CD4-positive, alpha-beta memory T cell (primary cell): ENCODE measurements at regions of chr1 and their contacts with region 1.

Region 1: GRCh38 chr1:222455188-222455879 is 92.6 kb downstream of the HHIPL2 start:
- DNase-seq: peak; percentile 76 to 81 (median 80)
- H3K4me3 ChIP-seq: no peak overlapping the region
- H3K4me3 Mint-ChIP-seq: peak overlapping the region in 7 of 8 donors; percentile 5 to 69 (median 46)
- H3K27ac ChIP-seq: no peak overlapping the region
- H3K27ac Mint-ChIP-seq: peak overlapping the region in 5 of 7 donors; percentile 2 to 87 (median 24)
- H3K4me1 ChIP-seq: peaks cover 7% of the 10 kb centered on the region
- H3K4me1 Mint-ChIP-seq: peaks cover 7 to 21% (median 18%) of the 10 kb centered on the region in 4 donors
- H3K27me3 ChIP-seq: no peaks in the 10 kb centered on the region
- H3K27me3 Mint-ChIP-seq: peaks cover 0 to 1% of the 10 kb centered on the region in 2 donors

Region 2: GRCh38 chr1:221891708-221892107 is 563.6 kb before region 1 on chr1:
- CTCF ChIA-PET with region 1: no interaction called
- POLR2A ChIA-PET with region 1: no interaction called
- intact Hi-C with region 1: loop called (anchors 2 kb)
- DNase-seq: no peak
- H3K4me3 ChIP-seq: no peak overlapping the region
- H3K4me3 Mint-ChIP-seq: no peak overlapping the region
- H3K27ac ChIP-seq: no peak overlapping the region
- H3K27ac Mint-ChIP-seq: no peak overlapping the region
- H3K4me1 ChIP-seq: no peaks in the 10 kb centered on the region
- H3K4me1 Mint-ChIP-seq: no peaks in the 10 kb centered on the region
- H3K27me3 ChIP-seq: no peaks in the 10 kb centered on the region
- H3K27me3 Mint-ChIP-seq: peaks cover 3 to 5% of the 10 kb centered on the region in 2 donors

Region 3: GRCh38 chr1:222095606-222096475 is 359.5 kb before region 1 on chr1:
- CTCF ChIA-PET with region 1: interaction called, 370 read pairs
- POLR2A ChIA-PET with region 1: interaction called, 6 read pairs
- intact Hi-C with region 1: loop called (anchors 1 kb)
- DNase-seq: peak; percentile 53 to 69 (median 61)
- H3K4me3 ChIP-seq: no peak overlapping the region
- H3K4me3 Mint-ChIP-seq: no peak overlapping the region
- H3K27ac ChIP-seq: no peak overlapping the region
- H3K27ac Mint-ChIP-seq: no peak overlapping the region
- H3K4me1 ChIP-seq: no peaks in the 10 kb centered on the region
- H3K4me1 Mint-ChIP-seq: no peaks in the 10 kb centered on the region
- H3K27me3 ChIP-seq: no peaks in the 10 kb centered on the region
- H3K27me3 Mint-ChIP-seq: no peaks in the 10 kb centered on the region

Region 4: GRCh38 chr1:222266223-222267196 is 188.8 kb before region 1 on chr1:
- CTCF ChIA-PET with region 1: interaction called, 11 read pairs
- POLR2A ChIA-PET with region 1: no interaction called
- intact Hi-C with region 1: no loop called
- DNase-seq: no peak
- H3K4me3 ChIP-seq: no peak overlapping the region
- H3K4me3 Mint-ChIP-seq: no peak overlapping the region
- H3K27ac ChIP-seq: no peak overlapping the region
- H3K27ac Mint-ChIP-seq: peak overlapping the region in 2 of 7 donors; percentile 23 to 29
- H3K4me1 ChIP-seq: no peaks in the 10 kb centered on the region
- H3K4me1 Mint-ChIP-seq: peaks cover 0 to 4% (median 1%) of the 10 kb centered on the region in 4 donors
- H3K27me3 ChIP-seq: no peaks in the 10 kb centered on the region
- H3K27me3 Mint-ChIP-seq: no peaks in the 10 kb centered on the region

Region 5: GRCh38 chr1:222334026-222334680 is 121.2 kb before region 1 on chr1:
- CTCF ChIA-PET with region 1: no interaction called
- POLR2A ChIA-PET with region 1: no interaction called
- intact Hi-C with region 1: no loop called
- DNase-seq: no peak
- H3K4me3 ChIP-seq: no peak overlapping the region
- H3K4me3 Mint-ChIP-seq: no peak overlapping the region
- H3K27ac ChIP-seq: no peak overlapping the region
- H3K27ac Mint-ChIP-seq: no peak overlapping the region
- H3K4me1 ChIP-seq: no peaks in the 10 kb centered on the region
- H3K4me1 Mint-ChIP-seq: peaks cover 0 to 3% (median 0%) of the 10 kb centered on the region in 4 donors
- H3K27me3 ChIP-seq: no peaks in the 10 kb centered on the region
- H3K27me3 Mint-ChIP-seq: peaks cover 0 to 2% of the 10 kb centered on the region in 2 donors

Region 6: DNA sequence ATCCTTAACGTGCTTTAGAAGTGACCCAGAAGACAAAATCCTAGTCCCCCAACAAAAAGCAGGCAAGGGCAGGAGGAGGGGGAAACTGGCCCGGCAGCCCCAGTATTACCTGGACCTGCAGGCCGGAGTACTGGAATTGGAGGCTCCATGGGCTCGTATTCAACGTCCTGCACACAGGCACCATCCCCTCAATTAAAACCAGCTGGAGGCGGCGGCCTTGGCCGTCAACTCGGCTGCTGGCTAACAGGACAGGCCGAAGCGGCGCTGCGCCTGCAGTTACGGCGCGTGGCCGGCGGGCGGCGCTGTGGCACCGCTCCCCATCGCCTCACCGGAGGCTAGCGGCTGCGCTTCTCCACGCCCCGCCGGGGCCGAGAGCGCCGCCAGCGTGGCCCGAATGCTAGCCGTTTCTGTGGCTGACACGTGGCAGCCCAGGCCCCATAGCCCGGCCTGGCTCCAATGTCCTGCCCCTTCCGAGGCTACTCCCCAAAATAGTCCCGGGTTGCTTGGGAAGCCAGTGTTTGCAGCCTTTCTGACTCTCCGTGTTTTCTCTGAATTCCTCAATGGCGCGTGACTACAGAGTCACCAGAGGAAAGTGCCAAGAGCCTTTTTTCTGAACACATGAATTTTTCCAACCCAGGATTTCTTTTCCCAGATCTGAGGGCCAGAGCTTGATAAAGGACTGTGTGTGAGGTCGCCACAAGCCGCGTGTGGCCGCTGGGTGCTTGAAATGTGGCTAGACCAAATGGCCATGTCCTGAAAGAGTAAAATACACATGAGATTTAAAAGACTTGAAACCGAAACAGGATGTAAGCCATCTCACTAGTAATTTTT is 10.1 kb after region 1 on chr1:
- CTCF ChIA-PET with region 1: interaction called, 52 read pairs
- POLR2A ChIA-PET with region 1: interaction called, 3 read pairs
- intact Hi-C with region 1: no loop called
- DNase-seq: peak; percentile 66 to 84 (median 79)
- H3K4me3 ChIP-seq: peak overlapping the region; percentile 62 to 73
- H3K4me3 Mint-ChIP-seq: peak overlapping the region; percentile 82 to 95 (median 89)
- H3K27ac ChIP-seq: peak overlapping the region; percentile 31
- H3K27ac Mint-ChIP-seq: peak overlapping the region; percentile 62 to 95 (median 91)
- H3K4me1 ChIP-seq: peaks cover 12% of the 10 kb centered on the region
- H3K4me1 Mint-ChIP-seq: peaks cover 8 to 14% (median 11%) of the 10 kb centered on the region in 4 donors
- H3K27me3 ChIP-seq: no peaks in the 10 kb centered on the region
- H3K27me3 Mint-ChIP-seq: peaks cover 0 to 5% of the 10 kb centered on the region in 2 donors

Region 7: GRCh38 chr1:222521299-222522104 is 66.2 kb after region 1 on chr1:
- CTCF ChIA-PET with region 1: no interaction called
- POLR2A ChIA-PET with region 1: no interaction called
- intact Hi-C with region 1: no loop called
- DNase-seq: no peak
- H3K4me3 ChIP-seq: no peak overlapping the region
- H3K4me3 Mint-ChIP-seq: no peak overlapping the region
- H3K27ac ChIP-seq: no peak overlapping the region
- H3K27ac Mint-ChIP-seq: no peak overlapping the region
- H3K4me1 ChIP-seq: no peaks in the 10 kb centered on the region
- H3K4me1 Mint-ChIP-seq: no peaks in the 10 kb centered on the region
- H3K27me3 ChIP-seq: no peaks in the 10 kb centered on the region
- H3K27me3 Mint-ChIP-seq: peaks cover 5 to 12% of the 10 kb centered on the region in 2 donors